ENCODE measurements at regions of chr19 and their contacts with region 1.

Region 1: DNA sequence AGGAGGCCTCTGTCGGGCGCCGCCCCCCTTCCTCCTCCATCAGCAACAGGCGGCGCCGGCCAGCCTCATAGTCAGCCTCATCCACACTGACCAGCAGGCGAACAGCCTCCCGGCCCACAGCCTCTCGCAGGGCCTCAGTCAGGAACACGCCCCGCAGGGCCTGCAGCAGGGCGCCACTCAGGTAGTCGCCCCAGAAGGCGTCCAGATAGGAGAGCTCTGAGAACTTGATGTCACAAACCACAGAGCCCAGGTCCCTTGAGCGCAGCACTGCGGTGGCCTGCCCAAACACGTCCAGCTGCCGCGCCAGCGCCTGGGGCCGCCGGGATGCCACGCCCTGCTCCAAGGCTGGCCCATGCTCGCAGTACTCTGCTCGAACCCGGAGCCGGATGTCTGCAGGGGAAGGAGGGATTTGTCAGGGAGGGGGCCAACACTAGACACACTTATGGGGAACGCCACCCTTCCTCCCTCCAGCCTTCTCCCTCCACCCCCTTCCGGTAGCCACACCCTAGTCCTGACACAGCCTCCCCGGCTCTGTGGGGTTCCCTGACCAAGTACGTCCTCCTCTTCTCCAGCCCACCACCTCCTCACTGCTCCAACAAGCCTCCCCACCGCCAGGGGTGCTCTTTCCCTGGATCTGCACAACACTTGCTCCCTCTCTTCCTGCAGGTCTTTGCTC is 17.9 kb downstream of the DEDD2 start:
- DNase-seq: peak; percentile 86
- H3K4me3 Mint-ChIP-seq: peak overlapping the region; percentile 65
- H3K27ac Mint-ChIP-seq: peak overlapping the region; percentile 98
- H3K4me1 Mint-ChIP-seq: peaks cover 80% of the 10 kb centered on the region
- H3K27me3 Mint-ChIP-seq: no peaks in the 10 kb centered on the region

Region 2: GRCh38 chr19:42184401-42184861 is 15.1 kb before region 1 on chr19:
- CTCF ChIA-PET with region 1: interaction called, 6 read pairs
- POLR2A ChIA-PET with region 1: no interaction called
- intact Hi-C with region 1: loop called (anchors 2 kb)
- DNase-seq: peak; percentile 83
- H3K4me3 Mint-ChIP-seq: no peak overlapping the region
- H3K27ac Mint-ChIP-seq: peak overlapping the region; percentile 19
- H3K4me1 Mint-ChIP-seq: peaks cover 37% of the 10 kb centered on the region
- H3K27me3 Mint-ChIP-seq: no peaks in the 10 kb centered on the region

Region 3: DNA sequence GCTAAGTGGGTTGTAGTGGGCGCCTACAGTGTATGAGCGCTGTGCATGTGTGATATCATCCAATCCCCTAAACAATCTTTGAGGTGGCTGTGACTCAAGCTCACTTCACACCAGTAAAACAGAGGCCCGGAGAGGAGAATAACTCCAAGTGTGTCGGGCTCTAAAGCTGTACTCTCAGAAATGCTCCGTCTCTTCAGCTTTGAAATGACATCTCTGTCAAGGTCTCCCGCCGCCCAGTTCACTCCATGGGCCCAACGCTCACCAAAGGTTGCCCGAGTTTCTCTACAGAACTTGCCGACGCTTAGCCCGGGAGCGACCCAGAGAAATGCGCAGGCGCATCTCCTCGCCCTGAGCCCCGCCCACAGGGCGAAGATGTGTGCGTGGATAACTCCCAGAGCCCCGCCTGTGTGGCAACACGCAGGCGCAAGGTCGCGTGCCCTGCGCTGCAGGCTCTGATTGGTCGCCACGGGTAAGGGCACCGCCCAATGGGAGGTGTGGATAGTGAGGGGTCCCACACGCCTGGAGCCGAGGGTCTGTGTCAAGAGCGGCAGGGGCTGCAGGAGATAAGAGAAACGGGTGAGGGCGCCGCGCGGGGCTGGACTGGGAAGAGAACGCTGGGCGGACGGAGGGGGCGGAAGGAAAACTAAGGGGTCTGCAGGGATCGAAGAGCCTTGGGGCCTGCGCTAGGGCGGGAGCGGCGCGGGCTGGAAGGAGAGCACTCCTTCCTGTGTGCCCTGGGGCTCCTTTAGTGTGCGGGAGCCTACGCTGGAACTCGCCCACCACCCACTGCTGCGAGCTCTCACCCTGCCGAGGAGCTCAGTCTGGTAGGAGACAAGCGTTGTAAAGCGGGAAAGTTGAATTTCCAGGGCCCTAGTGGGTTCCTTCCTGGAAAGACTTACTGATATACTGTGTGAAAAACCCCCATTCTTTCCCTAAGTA is 20.5 kb after region 1 on chr19 and contains the start of gene ZNF526:
- CTCF ChIA-PET with region 1: interaction called, 4 read pairs
- POLR2A ChIA-PET with region 1: interaction called, 6 read pairs
- intact Hi-C with region 1: loop called (anchors 1 kb)
- DNase-seq: peak; percentile 98
- H3K4me3 Mint-ChIP-seq: peak within 1 kb of the TSS; percentile 92
- H3K27ac Mint-ChIP-seq: peak within 1 kb of the TSS; percentile 99
- H3K4me1 Mint-ChIP-seq: peaks cover 43% of the 10 kb centered on the region
- H3K27me3 Mint-ChIP-seq: peaks cover 1% of the 10 kb centered on the region
- total RNA-seq, gene ZNF526: 12.3 to 14.9 TPM

Measured in activated CD4-positive, alpha-beta memory T cell treated with anti-CD3 and anti-CD28 coated beads for 36 hours (primary cell).